ENCODE measurements at regions of chr18 and their contacts with region 1.

Region 1: GRCh38 chr18:11553098-11553940 is 56.1 kb upstream of the SLC35G4 start:
- DNase-seq: peak; percentile 59
- H3K4me3 ChIP-seq: no peak overlapping the region
- H3K27ac ChIP-seq: no peak overlapping the region
- H3K4me1 ChIP-seq: no peaks in the 10 kb centered on the region
- H3K27me3 ChIP-seq: no peaks in the 10 kb centered on the region
- CTCF ChIP-seq: peak; percentile 76 to 86
- POLR2A ChIP-seq: no peak

Region 2: DNA sequence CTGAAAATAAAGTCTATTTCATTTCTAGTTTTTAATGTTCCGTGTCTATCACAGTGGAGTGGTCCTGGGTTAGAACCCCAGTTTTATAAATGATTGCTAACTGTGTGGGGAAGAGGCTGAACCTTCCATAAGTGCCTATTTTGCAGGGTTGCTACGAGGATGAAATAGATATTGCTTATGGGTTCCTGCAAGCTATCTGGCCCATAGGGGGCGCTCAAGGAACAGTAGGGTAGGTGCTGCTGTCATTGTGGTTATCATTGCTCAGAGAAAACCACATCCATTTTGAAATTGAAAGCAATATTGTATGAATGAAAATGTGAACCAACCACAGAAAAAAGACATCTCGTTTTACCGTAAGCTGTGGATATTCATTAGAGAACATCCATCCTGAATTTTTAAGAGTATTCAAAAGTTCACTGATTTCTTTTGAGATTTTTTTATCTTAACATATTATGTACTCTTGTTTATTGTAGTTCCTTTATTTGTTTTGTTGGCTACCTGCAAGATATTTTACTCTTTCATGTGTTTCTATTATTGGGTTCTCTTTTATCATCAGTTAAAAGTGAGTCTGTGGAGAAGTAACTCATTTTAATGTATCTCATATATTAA is 765.9 kb before region 1 on chr18:
- CTCF ChIA-PET with region 1: interaction called, 22 read pairs
- POLR2A ChIA-PET with region 1: no interaction called
- dilution Hi-C with region 1: no loop called
- intact Hi-C with region 1: loop called (anchors 5 kb)
- DNase-seq: peak; percentile 72
- H3K4me3 ChIP-seq: no peak overlapping the region
- H3K27ac ChIP-seq: no peak overlapping the region
- H3K4me1 ChIP-seq: no peaks in the 10 kb centered on the region
- H3K27me3 ChIP-seq: peaks cover 0 to 2% of the 10 kb centered on the region in 2 experiments
- CTCF ChIP-seq: peak; percentile 82 to 87
- POLR2A ChIP-seq: no peak

Region 3: DNA sequence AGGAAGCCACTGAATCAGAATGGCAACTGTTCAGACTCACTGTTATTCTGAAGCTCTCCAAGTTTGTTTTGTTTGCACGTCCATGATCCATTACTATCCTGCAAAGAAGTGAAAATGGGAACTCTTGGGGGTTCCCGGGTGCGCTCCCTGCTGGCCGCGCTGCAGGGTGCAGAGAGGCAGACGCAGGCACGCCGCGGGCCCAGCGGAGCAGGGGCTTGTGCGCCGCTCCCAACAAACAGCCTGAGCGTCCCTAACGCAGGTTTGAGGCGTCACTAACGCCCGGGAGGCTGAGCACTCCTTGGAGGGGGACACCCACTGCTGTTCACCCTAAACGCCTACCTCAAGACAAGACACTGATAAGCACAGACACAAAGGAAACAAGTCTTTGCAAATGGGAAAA is 389.7 kb before region 1 on chr18:
- CTCF ChIA-PET with region 1: interaction called, 12 read pairs
- POLR2A ChIA-PET with region 1: no interaction called
- dilution Hi-C with region 1: no loop called
- intact Hi-C with region 1: loop called (anchors 5 kb)
- DNase-seq: peak; percentile 36
- H3K4me3 ChIP-seq: no peak overlapping the region
- H3K27ac ChIP-seq: no peak overlapping the region
- H3K4me1 ChIP-seq: no peaks in the 10 kb centered on the region
- H3K27me3 ChIP-seq: peaks cover 0 to under 1% of the 10 kb centered on the region in 2 experiments
- CTCF ChIP-seq: peak; percentile 74 to 84
- POLR2A ChIP-seq: no peak

Region 4: DNA sequence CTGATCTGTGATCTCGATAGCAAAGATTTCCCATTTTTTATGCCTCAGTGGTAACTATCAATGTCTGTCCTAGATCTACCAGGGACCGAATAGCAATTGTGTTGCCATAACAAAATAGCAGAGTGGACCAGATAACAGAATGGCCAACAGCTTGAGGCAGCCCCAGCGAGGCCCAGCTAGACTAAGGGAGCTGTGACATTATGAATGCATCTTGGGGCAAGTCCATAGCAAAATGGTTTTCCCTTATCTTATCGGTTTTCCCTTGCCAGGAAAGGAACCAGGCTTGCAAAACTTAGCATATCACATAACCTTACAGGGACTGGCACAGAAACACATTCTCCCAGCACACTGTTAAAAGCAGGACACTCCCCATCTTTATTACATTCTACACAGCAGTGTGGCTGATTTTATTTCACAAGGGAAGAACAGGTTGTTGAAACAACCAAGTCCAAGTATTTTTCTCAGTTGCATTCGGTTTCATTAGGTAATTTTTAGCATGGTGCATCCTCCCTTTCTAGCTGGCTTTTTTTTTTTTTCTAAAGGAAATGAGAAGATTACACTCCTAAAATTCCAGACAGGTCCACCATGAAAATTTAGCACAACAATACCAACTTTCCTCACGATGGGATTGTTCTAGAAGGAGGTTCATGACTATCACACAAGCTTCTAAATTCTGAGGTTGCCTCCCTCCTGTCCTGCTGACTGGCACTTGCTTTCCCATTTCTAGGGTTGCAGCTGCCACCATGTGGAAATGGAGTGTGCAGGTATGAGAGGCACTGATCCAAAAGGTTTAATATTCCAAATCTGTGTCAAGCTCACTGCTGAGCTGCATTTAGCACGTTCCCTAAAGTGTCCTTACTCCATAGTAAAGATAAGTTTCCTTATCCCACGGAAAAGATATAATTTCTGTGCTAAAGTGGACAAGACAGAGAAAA is 41.0 kb before region 1 on chr18:
- CTCF ChIA-PET with region 1: interaction called, 12 read pairs
- POLR2A ChIA-PET with region 1: no interaction called
- dilution Hi-C with region 1: no loop called
- intact Hi-C with region 1: no loop called
- DNase-seq: no peak
- H3K4me3 ChIP-seq: no peak overlapping the region
- H3K27ac ChIP-seq: no peak overlapping the region
- H3K4me1 ChIP-seq: no peaks in the 10 kb centered on the region
- H3K27me3 ChIP-seq: no peaks in the 10 kb centered on the region
- CTCF ChIP-seq: no peak
- POLR2A ChIP-seq: no peak

Region 5: DNA sequence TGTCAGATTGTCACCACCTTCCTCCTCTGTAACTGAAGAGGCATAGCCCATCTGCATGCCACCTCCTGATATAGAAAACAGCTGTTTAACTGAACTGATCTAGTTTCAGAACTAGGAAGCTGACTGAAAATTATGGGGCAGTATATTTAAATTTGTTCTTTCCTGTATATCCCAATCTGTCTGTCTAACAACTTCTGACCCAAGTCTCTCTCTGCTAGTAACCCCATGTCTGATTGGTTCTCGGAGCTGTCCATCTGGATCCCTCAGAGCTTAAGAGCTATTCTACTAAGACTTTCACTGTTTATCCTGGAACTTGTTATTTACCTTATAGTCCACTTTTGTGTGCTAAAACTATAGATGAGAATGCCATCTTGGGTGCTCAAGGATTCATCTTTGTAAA is 12.1 kb before region 1 on chr18:
- CTCF ChIA-PET with region 1: interaction called, 30 read pairs
- POLR2A ChIA-PET with region 1: no interaction called
- dilution Hi-C with region 1: no loop called
- intact Hi-C with region 1: no loop called
- DNase-seq: no peak
- H3K4me3 ChIP-seq: no peak overlapping the region
- H3K27ac ChIP-seq: no peak overlapping the region
- H3K4me1 ChIP-seq: no peaks in the 10 kb centered on the region
- H3K27me3 ChIP-seq: no peaks in the 10 kb centered on the region
- CTCF ChIP-seq: no peak
- POLR2A ChIP-seq: no peak